ENCODE measurements at regions of chr11 and their contacts with region 1.

Region 1: DNA sequence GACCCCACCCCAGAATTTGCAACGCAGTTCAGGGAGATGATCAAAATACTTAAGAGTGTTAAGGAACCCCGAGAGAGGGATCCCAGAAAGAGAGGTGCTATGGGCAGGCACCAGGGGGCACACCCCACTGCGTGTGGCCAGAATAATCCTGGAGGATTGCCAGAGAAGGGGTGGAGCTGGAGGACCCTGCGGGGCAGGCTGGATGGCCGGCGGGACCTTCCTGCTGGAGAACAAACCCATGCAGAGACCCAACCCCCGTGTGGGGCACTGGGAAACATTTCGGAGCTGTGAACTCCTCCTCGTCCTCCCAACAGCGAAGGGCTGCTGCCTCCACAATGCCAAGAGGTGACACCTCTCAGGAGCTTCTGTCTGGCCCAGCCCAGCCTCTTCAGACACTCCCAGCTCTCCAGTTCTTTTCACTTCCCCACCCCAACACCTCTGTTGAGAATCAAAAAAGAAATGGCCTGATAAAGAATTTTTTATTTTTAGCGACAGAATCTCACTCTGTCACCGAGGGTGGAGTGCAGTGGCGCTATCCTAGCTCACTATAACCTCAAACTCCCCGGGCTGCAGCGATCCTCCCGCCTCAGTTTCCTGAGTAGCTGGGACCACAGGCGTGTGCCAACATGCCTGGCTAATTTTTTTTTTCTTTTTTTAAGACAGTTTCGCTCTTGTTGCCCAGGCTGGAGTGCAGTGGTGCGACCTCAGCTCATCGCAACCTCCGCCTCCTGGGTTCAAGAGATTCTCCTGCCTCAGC is 25.6 kb downstream of the RHOD start:
- DNase-seq: no peak
- ATAC-seq: peak; percentile 62

Region 2: GRCh38 chr11:66904055-66904454 is 178.2 kb before region 1 on chr11:
- intact Hi-C with region 1: no loop called
- DNase-seq: no peak
- ATAC-seq: no peak

Region 3: GRCh38 chr11:67160874-67161783 is 78.9 kb after region 1 on chr11:
- intact Hi-C with region 1: loop called (anchors 10 kb)
- DNase-seq: no peak
- ATAC-seq: no peak

Measured in left ventricle myocardium superior (tissue), 1 donor.